Activated B cell treated with CpG ODN at 0.5 μM for 24 hours (primary cell): ENCODE measurements at regions of chr7 and their contacts with region 1.

Region 1: GRCh38 chr7:106659963-106660861 is 746 bp downstream of the CCDC71L start:
- DNase-seq: peak; percentile 79
- ATAC-seq: peak; percentile 52
- H3K4me3 Mint-ChIP-seq: peak overlapping the region; percentile 94
- H3K27ac Mint-ChIP-seq: peak overlapping the region; percentile 90
- H3K4me1 Mint-ChIP-seq: peaks cover 34% of the 10 kb centered on the region
- H3K27me3 Mint-ChIP-seq: no peaks in the 10 kb centered on the region
- CTCF ChIP-seq: peak; percentile 84

Region 2: DNA sequence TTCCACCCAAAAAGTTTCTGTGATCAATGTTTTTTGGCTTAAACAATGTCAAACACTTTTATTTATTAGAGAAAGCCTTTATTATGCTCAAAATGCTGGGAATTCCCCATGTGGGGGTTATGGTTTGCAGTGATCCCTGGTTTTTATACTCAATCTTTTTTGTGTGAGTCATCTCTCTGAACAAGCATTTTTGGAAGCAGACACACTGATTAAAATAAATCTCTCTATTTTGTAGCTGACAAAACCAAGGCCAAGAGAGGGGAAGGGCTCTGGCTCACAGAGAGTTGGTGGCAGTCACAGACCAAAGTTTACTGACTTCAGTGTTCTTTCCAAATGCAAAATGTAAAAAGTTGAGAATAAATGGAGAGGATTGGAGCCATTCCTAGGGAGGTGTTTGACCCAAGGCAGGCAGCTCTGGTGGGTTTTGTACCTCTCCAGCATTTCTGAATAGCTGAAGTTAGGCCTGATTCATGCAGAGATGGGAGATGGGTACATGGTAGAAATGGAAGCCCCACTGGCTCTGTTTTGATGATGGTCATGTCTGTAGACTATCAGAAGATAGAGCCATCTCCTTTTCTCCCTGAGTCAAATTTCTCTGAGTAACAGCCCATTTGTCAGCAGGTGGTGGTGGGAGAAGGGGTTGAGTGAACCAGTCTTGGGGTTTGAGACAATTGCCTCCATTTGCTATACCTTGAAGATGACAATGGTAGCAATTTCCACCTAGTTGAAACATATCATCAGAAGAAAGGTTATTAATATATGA is 330.1 kb before region 1 on chr7:
- CTCF ChIA-PET with region 1: no interaction called
- POLR2A ChIA-PET with region 1: no interaction called
- intact Hi-C with region 1: no loop called
- DNase-seq: no peak
- ATAC-seq: no peak
- H3K4me3 Mint-ChIP-seq: no peak overlapping the region
- H3K27ac Mint-ChIP-seq: no peak overlapping the region
- H3K4me1 Mint-ChIP-seq: no peaks in the 10 kb centered on the region
- H3K27me3 Mint-ChIP-seq: peaks cover 10% of the 10 kb centered on the region
- CTCF ChIP-seq: no peak

Region 3: GRCh38 chr7:106542550-106543220 is 117.5 kb before region 1 on chr7:
- CTCF ChIA-PET with region 1: interaction called, 67 read pairs
- POLR2A ChIA-PET with region 1: interaction called, 6 read pairs
- intact Hi-C with region 1: loop called (anchors 1 kb)
- DNase-seq: no peak
- ATAC-seq: peak; percentile 90
- H3K4me3 Mint-ChIP-seq: no peak overlapping the region
- H3K27ac Mint-ChIP-seq: no peak overlapping the region
- H3K4me1 Mint-ChIP-seq: peaks cover 4% of the 10 kb centered on the region
- H3K27me3 Mint-ChIP-seq: peaks cover 2% of the 10 kb centered on the region
- CTCF ChIP-seq: no peak

Region 4: GRCh38 chr7:106646256-106646655 is 14.0 kb before region 1 on chr7:
- CTCF ChIA-PET with region 1: no interaction called
- POLR2A ChIA-PET with region 1: no interaction called
- intact Hi-C with region 1: no loop called
- DNase-seq: no peak
- ATAC-seq: no peak
- H3K4me3 Mint-ChIP-seq: no peak overlapping the region
- H3K27ac Mint-ChIP-seq: no peak overlapping the region
- H3K4me1 Mint-ChIP-seq: peaks cover 7% of the 10 kb centered on the region
- H3K27me3 Mint-ChIP-seq: no peaks in the 10 kb centered on the region
- CTCF ChIP-seq: no peak

Region 5: GRCh38 chr7:106679153-106679931 is 19.1 kb after region 1 on chr7:
- CTCF ChIA-PET with region 1: interaction called, 8 read pairs
- POLR2A ChIA-PET with region 1: interaction called, 4 read pairs
- intact Hi-C with region 1: loop called (anchors 2 kb)
- DNase-seq: no peak
- ATAC-seq: peak; percentile 21
- H3K4me3 Mint-ChIP-seq: no peak overlapping the region
- H3K27ac Mint-ChIP-seq: no peak overlapping the region
- H3K4me1 Mint-ChIP-seq: peaks cover 9% of the 10 kb centered on the region
- H3K27me3 Mint-ChIP-seq: no peaks in the 10 kb centered on the region
- CTCF ChIP-seq: no peak

Region 6: DNA sequence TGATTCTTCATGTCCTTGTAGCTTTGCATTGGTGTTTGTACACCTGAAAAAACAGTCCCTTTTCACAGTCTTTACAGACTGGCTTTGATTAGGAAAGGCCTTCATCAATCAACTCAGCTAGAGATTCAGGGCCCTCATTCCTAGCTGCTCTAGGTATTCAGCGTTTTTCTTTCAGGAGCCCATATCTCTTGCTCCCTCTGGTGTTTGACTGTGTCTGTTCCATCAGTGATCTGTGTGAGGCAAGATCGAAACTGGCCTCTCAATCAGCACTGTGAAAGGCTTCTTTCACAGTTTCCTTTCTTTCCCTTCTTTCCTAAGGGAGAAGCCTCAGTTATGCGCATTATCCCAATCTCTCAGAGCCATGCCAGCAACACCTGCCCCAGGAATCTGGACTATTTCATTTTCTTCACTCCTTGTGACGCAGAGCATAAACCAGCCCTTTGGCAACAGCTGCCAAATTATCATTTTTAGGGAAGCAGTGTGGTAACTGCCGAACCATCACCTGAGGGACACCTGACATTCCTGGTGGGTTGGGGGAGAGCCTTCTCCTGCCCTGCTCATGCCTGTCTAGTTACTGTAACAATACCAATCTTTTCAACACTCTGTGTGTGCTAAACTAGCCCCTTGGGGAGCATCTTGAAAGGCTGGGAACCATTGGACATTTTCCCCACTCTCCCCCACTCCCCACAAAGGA is 76.4 kb after region 1 on chr7:
- CTCF ChIA-PET with region 1: interaction called, 245 read pairs
- POLR2A ChIA-PET with region 1: interaction called, 72 read pairs
- intact Hi-C with region 1: loop called (anchors 1 kb)
- DNase-seq: no peak
- ATAC-seq: peak; percentile 99
- H3K4me3 Mint-ChIP-seq: peak overlapping the region; percentile 55
- H3K27ac Mint-ChIP-seq: peak overlapping the region; percentile 79
- H3K4me1 Mint-ChIP-seq: peaks cover 19% of the 10 kb centered on the region
- H3K27me3 Mint-ChIP-seq: no peaks in the 10 kb centered on the region
- CTCF ChIP-seq: no peak

Region 7: DNA sequence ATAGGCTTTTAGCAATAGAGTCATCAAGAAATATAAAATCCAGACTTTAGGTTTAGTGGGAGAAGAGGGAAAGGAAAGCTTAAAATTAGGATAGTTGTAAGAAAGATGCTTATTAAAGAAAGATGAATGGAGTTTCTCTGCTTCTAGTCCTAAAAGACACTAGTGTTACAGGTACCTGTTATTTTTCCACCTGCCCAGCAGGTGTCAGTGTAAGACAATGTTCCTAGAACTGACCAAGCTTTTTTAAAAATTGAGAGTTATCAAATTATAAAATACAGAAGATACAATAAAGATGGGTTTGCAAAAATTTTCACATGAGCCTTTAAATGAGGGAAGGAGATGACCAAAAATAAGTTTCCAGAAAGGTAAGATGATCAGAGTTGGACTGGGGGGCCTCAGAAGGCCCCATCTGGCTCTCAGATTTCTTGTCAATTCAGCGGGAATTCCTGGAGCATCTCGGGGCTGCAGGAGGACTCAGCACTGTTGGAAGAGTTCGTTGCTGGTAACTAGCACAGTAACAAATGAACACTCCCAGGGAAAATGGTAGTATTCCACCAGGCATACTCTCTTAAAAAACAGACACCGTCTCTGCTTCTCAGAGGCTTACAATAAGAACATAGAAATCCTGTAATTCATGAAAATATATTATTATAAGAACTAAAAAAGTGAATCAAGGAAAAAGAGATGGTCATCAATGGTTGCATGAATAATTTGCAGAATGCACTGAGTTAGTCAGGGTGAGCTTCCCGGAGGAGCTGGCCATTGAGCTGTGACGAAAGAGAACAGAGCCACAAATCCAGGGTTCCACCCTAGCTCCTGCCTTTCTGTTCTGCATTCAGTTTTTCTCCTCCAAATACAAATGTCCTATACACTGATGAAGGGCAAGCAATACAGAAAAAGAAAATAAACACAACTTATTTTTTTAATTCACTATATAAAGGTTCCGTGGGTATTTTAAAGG is 133.1 kb after region 1 on chr7:
- CTCF ChIA-PET with region 1: no interaction called
- POLR2A ChIA-PET with region 1: no interaction called
- intact Hi-C with region 1: loop called (anchors 5 kb)
- DNase-seq: no peak
- ATAC-seq: peak; percentile 60
- H3K4me3 Mint-ChIP-seq: no peak overlapping the region
- H3K27ac Mint-ChIP-seq: no peak overlapping the region
- H3K4me1 Mint-ChIP-seq: peaks cover 2% of the 10 kb centered on the region
- H3K27me3 Mint-ChIP-seq: peaks cover 4% of the 10 kb centered on the region
- CTCF ChIP-seq: peak; percentile 92

Region 8: DNA sequence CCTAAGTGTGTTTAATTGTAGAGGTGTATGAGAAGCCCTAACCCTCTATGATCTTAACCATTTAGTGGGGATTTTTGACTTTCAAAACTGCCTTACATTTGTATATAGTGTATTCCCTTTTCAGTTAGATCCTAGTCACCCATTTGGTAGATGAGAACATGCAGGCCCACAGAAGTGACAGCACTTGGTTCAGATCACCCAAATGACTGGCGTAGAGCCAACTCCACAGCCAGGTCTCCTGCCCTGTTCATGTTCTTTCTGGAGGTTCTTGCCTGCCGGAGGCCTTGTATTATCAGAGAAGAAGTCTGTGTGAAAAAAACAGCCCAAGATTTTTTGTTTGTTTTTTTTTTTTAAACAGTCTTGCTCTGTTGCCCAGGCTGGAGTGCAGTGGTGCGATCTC is 482.2 kb after region 1 on chr7:
- CTCF ChIA-PET with region 1: no interaction called
- POLR2A ChIA-PET with region 1: no interaction called
- intact Hi-C with region 1: no loop called
- DNase-seq: no peak
- ATAC-seq: no peak
- H3K4me3 Mint-ChIP-seq: no peak overlapping the region
- H3K27ac Mint-ChIP-seq: no peak overlapping the region
- H3K4me1 Mint-ChIP-seq: peaks cover 6% of the 10 kb centered on the region
- H3K27me3 Mint-ChIP-seq: no peaks in the 10 kb centered on the region
- CTCF ChIP-seq: no peak

Region 9: DNA sequence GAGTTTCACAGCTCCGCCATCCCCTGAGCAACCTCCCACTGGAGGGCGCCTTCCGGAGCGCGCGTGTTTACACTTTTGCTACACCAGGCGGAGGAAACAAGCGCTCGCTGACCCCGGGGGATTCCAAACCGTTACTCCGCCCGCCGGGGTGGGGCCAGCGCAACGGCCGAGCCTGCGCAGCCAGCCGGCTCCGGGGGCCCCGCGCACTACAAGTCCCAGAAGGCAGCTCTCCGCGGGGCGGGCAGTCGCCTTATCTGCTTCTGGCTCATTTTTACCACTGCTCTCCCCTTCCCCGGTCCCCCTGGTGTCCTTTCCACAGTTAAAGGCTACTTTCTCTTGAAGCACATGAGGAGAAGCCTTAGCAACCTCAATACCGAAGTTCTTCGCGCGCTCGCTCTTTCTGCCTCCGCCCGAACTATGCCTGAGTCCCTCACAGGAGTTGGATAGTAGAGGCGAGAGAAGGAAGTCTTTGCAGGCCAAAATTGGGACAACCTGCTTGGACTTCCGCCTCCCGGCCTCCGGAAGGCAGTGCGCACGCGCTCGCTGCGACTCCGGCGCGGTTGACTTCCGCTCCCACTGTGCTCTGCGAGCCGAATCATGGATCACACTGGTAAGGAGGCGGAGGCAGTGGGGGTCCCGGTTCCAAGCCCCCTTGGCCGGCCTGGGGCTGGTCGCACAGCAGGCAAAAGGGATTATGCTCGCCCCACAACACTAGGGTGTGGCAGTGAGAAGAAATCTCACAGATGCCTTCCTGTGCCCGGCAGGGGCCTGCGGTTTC is 1083.5 kb after region 1 on chr7 and contains the start of gene CBLL1:
- CTCF ChIA-PET with region 1: no interaction called
- POLR2A ChIA-PET with region 1: no interaction called
- intact Hi-C with region 1: loop called (anchors 1 kb)
- DNase-seq: peak; percentile 97
- ATAC-seq: peak; percentile 89
- H3K4me3 Mint-ChIP-seq: peak within 1 kb of the TSS; percentile 96
- H3K27ac Mint-ChIP-seq: peak within 1 kb of the TSS; percentile 99
- H3K4me1 Mint-ChIP-seq: peaks cover 53% of the 10 kb centered on the region
- H3K27me3 Mint-ChIP-seq: no peaks in the 10 kb centered on the region
- CTCF ChIP-seq: no peak
- total RNA-seq, gene CBLL1: 35.3 and 47.2 TPM in 2 replicates